ENCODE measurements at regions of chr12 and their contacts with region 1.

Region 1: DNA sequence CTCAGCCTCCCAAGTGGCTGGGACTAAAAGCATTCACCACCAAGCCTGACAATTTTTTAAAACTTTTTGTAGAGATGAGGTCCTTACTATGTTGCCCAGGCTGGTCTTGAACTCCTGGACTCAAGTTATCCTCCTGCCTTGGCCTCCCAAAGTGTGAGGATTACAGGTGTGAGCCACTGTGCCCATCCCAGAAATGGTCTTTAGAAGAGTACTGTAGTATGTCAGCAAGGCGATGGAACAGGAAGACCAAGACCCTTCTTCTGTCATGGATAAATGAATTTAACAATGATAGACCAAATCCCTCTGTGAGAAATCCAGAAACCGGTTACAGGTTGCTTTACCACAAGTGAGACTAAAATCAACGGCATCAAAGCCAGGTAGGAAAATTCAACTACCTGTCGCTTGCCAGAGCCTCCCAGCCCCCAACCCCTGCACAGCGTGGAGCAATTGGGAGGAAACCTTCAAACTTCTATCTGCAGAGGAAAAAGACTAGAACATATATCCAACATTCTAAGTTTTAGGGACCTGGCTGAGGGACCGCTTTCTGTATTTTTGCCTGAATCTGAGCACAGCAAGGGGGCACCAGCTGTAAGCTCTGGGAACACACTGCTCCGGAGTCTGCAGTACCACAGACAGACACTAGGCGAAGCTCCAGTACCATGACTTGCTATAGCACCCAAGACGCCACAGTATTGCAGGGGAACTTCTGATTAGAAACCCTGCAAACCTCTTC is 51.3 kb downstream of the CPSF6 start:
- DNase-seq: peak in 8 of 10 donors; percentile 21 to 94 (median 66)

Region 2: DNA sequence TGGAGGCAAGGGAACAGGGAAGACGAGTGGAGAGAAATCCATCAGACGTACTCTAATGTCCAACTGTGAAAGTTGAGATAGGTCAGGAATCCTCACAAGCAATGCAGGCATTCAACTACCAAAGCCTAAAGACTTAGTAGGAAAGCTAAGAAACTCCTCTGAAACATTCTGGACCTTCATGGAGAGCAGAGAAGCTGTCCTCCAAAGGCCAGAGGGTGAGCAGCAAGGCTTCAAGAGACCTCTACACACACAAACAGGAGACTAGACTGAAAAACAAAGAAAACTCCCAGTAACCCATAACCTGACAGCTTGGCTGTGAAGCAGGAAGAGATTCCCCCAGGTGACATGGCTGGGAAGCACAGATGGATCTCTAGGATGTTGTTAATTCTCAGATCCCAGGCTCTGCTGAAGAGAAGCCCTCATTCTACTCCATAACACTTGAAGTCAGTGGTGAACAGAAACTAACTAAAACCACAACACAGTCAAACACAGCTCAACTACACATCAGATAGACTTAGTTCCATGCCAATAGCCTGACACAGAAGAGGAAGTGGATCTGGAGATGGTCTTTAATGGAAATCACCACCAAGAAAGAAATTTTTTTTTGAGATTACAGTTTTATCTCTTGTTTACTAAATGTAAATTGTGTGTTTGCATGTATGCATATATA is 34.2 kb after region 1 on chr12:
- intact Hi-C with region 1: no loop called
- DNase-seq: no peak

Region 3: GRCh38 chr12:69502345-69503081 is 211.8 kb after region 1 on chr12:
- intact Hi-C with region 1: no loop called
- DNase-seq: no peak

Region 4: GRCh38 chr12:69585189-69586062 is 294.7 kb after region 1 on chr12 and contains the start of gene CCT2:
- intact Hi-C with region 1: loop called (anchors 10 kb)
- DNase-seq: peak; percentile 94 to 100 (median 98)